GM13977 (cell line): ENCODE measurements at regions of chr1 and their contacts with region 1.

Region 1: GRCh38 chr1:86380257-86380861 is 15.8 kb downstream of the ODF2L start:
- DNase-seq: peak; percentile 48
- CTCF ChIP-seq: peak; percentile 65

Region 2: DNA sequence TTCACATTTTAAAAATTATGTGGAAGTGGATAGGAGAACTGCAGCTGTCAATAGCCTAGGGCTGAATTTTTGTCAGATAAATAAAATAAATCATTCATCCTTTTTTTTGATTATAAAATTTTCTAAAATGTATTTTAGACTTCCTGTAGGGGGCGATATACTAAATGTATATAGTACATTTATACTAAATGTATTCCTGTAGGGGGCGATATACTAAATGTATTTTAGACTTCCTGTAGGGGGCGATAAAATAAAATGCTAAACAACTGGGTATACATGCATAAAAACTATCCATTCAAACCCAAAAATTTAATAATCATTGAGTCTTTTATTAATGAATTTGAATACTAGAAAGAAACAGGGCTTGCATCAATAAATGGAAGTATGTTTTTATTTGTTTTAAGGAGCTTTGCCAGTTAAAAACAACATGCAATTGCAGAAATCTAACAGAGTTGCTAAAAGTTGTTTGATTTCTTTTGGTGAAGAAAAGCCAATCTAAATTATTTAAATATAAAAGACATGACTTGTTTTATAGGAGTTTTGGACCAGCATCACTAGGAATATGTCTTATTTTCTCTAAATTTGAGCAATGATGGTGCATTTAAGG is 119.7 kb after region 1 on chr1:
- in situ Hi-C with region 1: loop called (anchors 10 kb)
- DNase-seq: peak; percentile 34
- CTCF ChIP-seq: peak; percentile 85